ENCODE measurements at regions of chr17 and their contacts with region 1.

Region 1: DNA sequence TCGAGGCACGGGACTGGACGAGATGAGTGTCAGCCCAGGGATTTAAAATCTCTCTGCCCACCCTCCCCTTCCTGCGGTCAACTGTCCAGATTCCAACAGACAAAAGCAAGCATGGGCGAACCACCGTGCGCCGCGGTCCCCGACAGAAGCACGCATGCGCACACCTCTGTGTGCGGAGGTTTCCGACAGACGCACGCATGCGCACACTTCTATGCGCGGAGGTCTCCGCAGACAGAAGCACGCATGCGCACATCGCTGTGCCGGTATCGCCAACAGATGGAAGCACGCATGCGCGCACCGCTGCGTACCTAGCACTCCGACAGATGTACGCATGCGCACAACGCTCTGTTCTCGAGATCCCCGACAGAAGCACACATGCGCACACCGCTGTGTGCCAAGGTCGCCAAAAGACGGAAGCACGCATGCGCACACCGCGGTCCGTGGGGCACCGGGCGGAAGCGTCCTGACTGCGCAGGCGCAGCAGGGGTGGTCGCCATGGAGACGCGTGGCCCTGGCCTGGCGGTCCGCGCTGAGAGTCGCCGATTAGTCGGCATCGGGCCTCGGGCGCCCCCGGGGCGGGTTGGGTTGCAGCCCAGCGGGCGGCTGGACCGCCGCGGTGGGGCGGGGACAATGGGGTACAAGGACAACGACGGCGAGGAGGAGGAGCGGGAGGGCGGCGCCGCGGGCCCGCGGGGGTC is 57.4 kb upstream of the RPH3AL start:
- DNase-seq: peak; percentile 99 to 100
- ATAC-seq: peak; percentile 87

Region 2: DNA sequence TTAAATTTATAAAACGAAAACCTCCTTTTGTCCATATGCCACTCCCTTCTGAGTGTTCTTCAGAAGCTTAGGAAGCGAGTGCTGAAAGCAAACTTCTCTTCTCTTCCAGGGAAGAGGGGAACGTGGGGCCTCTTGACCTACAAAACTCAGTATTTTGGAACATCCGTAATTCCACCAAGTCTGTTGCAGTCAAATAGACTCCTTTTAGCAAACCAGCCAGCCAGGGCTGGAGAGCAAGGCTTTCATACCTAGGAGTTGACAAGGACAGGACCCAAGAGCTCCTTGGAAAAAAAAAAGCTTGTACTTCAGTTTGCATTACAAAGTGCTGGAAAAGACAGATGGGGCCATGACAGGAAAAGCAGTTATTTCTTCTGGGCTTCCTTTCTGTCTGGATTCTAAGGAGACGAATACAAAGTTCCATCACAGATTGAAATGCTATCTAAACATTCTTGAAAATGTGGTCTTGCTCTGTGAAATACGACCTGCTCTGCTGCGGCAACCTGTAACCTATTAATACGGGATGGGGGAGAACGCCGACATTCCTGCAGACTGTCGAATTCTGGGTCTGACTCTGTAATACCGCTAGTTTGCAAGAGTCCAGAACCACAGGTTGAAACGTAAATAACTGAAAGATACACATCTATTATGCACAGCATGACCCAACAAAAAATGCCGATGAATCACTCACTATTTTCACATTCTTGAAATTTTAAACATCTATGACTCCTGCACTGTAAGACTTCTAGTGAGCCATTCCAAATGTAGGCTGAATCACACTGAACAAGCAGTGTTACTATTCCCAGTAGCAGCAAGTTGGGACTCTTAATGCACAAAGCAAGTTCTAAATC is 284.0 kb after region 1 on chr17:
- intact Hi-C with region 1: loop called in 1 of 2 experiments (anchors 5 kb)
- DNase-seq: no peak
- ATAC-seq: no peak

Region 3: GRCh38 chr17:979538-980405 is 569.8 kb after region 1 on chr17 and contains the start of gene NXN:
- intact Hi-C with region 1: loop called in 1 of 2 experiments (anchors 5 kb)
- DNase-seq: peak; percentile 72 to 89
- ATAC-seq: peak; percentile 96
- total RNA-seq, gene NXN: 3.9 to 14.5 TPM